WTC11 (cell line): ENCODE measurements at regions of chr22 and their contacts with region 1.

Region 1: GRCh38 chr22:26483439-26484359 is at the starts of genes HPS4 and SRRD:
- DNase-seq: peak; percentile 93
- ATAC-seq: peak; percentile 92
- H3K4me3 Mint-ChIP-seq: peak within 1 kb of the TSS; percentile 89
- H3K27ac Mint-ChIP-seq: peak within 1 kb of the TSS; percentile 94
- H3K4me1 Mint-ChIP-seq: peaks cover 45% of the 10 kb centered on the region
- H3K27me3 Mint-ChIP-seq: no peaks in the 10 kb centered on the region
- CTCF ChIP-seq: no peak
- total RNA-seq, gene HPS4: 41.1 to 48.1 TPM (median 42.7 TPM) in 3 replicates
- total RNA-seq, gene SRRD: 20.0 to 25.1 TPM (median 22.9 TPM) in 3 replicates

Region 2: DNA sequence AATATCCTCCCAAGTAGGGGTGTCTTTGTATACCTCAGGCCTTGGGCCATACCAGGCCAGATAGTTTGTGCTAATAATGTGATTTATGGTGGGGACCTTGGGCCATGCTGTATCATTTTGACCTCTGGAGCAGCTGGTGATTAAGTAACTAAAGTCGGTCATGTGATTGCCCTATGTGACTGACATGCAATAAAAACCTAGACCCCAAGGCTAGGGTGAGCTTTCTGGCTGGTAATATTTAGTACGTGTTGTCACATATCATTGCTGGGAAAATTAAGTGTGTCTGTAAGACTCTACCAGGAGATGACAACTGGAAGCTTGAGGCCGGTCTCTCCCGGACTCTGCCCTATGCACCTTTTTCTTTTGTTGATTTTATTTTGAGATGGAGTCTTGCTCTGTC is 41.2 kb after region 1 on chr22:
- CTCF ChIA-PET with region 1: no interaction called
- POLR2A ChIA-PET with region 1: no interaction called
- DNase-seq: no peak
- ATAC-seq: no peak
- H3K4me3 Mint-ChIP-seq: no peak overlapping the region
- H3K27ac Mint-ChIP-seq: no peak overlapping the region
- H3K4me1 Mint-ChIP-seq: no peaks in the 10 kb centered on the region
- H3K27me3 Mint-ChIP-seq: no peaks in the 10 kb centered on the region
- CTCF ChIP-seq: no peak

Region 3: GRCh38 chr22:26672590-26673468 is 189.1 kb after region 1 on chr22:
- CTCF ChIA-PET with region 1: interaction called, 17 read pairs
- POLR2A ChIA-PET with region 1: interaction called, 3 read pairs
- DNase-seq: peak; percentile 90
- ATAC-seq: peak; percentile 76
- H3K4me3 Mint-ChIP-seq: peak overlapping the region; percentile 89
- H3K27ac Mint-ChIP-seq: peak overlapping the region; percentile 92
- H3K4me1 Mint-ChIP-seq: peaks cover 56% of the 10 kb centered on the region
- H3K27me3 Mint-ChIP-seq: no peaks in the 10 kb centered on the region
- CTCF ChIP-seq: no peak